CD4-positive, alpha-beta T cell (primary cell): ENCODE measurements at regions of chr11 and their contacts with region 1.

Region 1: DNA sequence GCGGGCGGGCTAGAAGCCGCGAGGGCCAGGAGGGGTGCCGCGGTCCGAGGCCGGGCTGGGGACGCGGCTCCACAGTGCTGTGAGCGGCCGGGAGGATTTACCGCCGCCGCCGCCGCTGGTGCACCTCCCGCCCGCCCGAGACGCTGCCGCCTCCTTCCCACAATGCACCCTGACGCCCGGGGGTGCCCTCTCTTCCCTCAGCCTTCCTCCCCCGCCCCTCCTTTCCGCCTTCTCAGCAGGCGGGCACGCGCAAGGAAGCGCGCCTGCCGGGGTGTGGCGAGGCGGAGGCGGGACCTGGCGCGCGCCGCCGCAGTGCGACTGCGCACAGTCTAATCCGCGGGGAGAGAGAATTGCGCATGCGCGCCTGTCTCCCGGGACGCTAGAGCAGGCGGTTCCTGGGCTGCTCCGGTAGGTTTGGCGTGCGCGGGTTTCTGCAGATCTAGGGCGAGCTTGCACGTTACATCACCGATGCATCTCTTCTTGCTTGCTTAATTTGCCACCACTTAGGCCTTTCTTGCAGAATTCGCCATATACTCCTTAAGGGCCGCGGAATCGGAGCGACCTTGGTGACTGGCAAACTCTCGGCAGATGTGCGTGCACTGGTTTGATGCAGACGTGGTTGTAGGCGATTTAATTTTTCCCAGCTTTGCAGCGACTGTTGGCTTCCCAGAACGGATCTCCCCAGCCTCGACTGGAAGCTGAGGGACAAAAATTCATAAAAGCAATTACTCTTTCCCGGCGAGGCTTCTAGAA is at the starts of genes GVQW3 and THAP12:
- DNase-seq: peak; percentile 93 to 99 (median 97)
- ATAC-seq: peak; percentile 89
- H3K4me3 ChIP-seq: peak within 1 kb of the TSS; percentile 78
- H3K4me3 Mint-ChIP-seq: peak within 1 kb of the TSS; percentile 97
- H3K27ac ChIP-seq: peak within 1 kb of the TSS; percentile 11 to 24
- H3K27ac Mint-ChIP-seq: peak within 1 kb of the TSS; percentile 87
- H3K4me1 ChIP-seq: peaks cover 45% of the 10 kb centered on the region
- H3K4me1 Mint-ChIP-seq: peaks cover 76% of the 10 kb centered on the region
- H3K27me3 ChIP-seq: no peaks in the 10 kb centered on the region
- H3K27me3 Mint-ChIP-seq: no peaks in the 10 kb centered on the region
- CTCF ChIP-seq: no peak
- total RNA-seq, gene GVQW3: 1.8 TPM
- total RNA-seq, gene THAP12: 34.8 to 36.3 TPM

Region 2: DNA sequence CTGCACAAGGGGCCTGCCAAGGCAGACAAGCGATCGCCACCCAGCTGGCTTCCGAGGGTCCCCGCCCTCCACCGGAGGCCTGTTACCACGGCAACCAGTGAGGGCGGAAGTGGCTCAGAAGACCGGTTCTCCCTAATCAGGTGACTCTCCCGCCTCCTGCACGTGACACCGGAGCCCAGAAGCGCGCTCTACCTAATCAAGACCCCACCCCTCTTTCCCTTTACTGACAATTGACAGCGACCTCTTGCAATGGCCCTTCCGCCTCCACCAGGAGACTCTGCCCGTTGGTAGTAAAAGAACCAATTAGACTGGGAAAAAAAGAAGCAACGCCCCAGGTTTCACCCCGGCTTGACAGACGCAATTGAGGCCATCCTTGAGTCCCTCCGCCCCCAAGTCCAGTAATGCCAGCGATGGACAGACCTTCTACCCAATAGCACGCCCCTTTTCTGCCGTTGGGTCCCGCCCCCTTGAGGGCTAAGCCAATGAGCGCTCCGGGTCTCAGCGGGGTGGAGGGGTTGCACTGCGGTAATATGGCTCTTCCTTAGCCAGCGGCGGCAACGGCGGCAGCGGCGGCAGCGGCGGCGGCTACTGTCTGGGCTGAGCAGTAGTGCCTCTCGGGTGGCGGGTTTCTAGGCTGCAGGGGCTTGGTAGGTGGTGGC is 566.3 kb before region 1 on chr11 and contains the start of gene UVRAG:
- CTCF ChIA-PET with region 1: no interaction called
- POLR2A ChIA-PET with region 1: no interaction called
- intact Hi-C with region 1: loop called in 1 of 2 experiments (anchors 5 kb)
- DNase-seq: peak; percentile 96 to 99 (median 97)
- ATAC-seq: peak; percentile 86
- H3K4me3 ChIP-seq: peak within 1 kb of the TSS; percentile 88
- H3K4me3 Mint-ChIP-seq: peak within 1 kb of the TSS; percentile 95
- H3K27ac ChIP-seq: peak within 1 kb of the TSS; percentile 78 to 83
- H3K27ac Mint-ChIP-seq: peak within 1 kb of the TSS; percentile 92
- H3K4me1 ChIP-seq: peaks cover 30% of the 10 kb centered on the region
- H3K4me1 Mint-ChIP-seq: peaks cover 29% of the 10 kb centered on the region
- H3K27me3 ChIP-seq: no peaks in the 10 kb centered on the region
- H3K27me3 Mint-ChIP-seq: no peaks in the 10 kb centered on the region
- CTCF ChIP-seq: no peak
- total RNA-seq, gene UVRAG: 16.5 to 19.5 TPM

Region 3: GRCh38 chr11:76235233-76236091 is 145.7 kb before region 1 on chr11:
- CTCF ChIA-PET with region 1: no interaction called
- POLR2A ChIA-PET with region 1: no interaction called
- intact Hi-C with region 1: loop called (anchors 1 to 5 kb)
- DNase-seq: peak; percentile 82 to 96 (median 90)
- ATAC-seq: peak; percentile 77
- H3K4me3 ChIP-seq: peak overlapping the region; percentile 84
- H3K4me3 Mint-ChIP-seq: peak overlapping the region; percentile 100
- H3K27ac ChIP-seq: peak overlapping the region; percentile 10 to 37
- H3K27ac Mint-ChIP-seq: peak overlapping the region; percentile 99
- H3K4me1 ChIP-seq: peaks cover 58% of the 10 kb centered on the region
- H3K4me1 Mint-ChIP-seq: peaks cover 54% of the 10 kb centered on the region
- H3K27me3 ChIP-seq: no peaks in the 10 kb centered on the region
- H3K27me3 Mint-ChIP-seq: peaks cover 18% of the 10 kb centered on the region
- CTCF ChIP-seq: no peak